CD8-positive, alpha-beta T cell (primary cell): ENCODE measurements at regions of chr17 and their contacts with region 1.

Region 1: DNA sequence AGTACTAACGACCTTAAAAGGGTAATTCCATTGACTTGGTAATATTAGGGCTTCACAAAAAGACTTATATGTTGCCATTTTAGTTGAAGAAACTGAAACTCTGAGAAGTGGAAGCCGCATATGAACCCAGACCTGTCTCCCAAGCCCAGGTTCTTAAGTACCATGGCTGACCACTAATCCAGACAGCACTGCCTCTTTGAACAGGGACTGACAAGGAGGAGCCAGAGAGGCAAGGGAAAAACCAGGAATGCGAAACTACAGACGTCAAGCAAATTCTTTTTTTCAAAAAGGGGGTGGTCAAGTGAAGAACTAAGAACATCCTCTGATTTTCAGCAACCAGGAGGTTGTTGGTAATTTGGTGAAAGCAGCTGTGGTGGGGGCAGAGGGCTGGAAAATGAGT is 15.2 kb downstream of the CYB5D1 start:
- DNase-seq: no peak
- ATAC-seq: no peak
- H3K4me3 ChIP-seq: no peak overlapping the region
- H3K4me3 Mint-ChIP-seq: no peak overlapping the region
- H3K27ac ChIP-seq: no peak overlapping the region
- H3K27ac Mint-ChIP-seq: no peak overlapping the region
- H3K4me1 ChIP-seq: peaks cover 18% of the 10 kb centered on the region
- H3K4me1 Mint-ChIP-seq: peaks cover 32% of the 10 kb centered on the region
- H3K27me3 ChIP-seq: no peaks in the 10 kb centered on the region
- H3K27me3 Mint-ChIP-seq: no peaks in the 10 kb centered on the region
- CTCF ChIP-seq: no peak

Region 2: GRCh38 chr17:7650509-7651096 is 222.4 kb before region 1 on chr17 and contains the start of gene ATP1B2:
- CTCF ChIA-PET with region 1: no interaction called
- POLR2A ChIA-PET with region 1: no interaction called
- intact Hi-C with region 1: no loop called
- DNase-seq: peak; percentile 44 to 88 (median 83)
- ATAC-seq: peak; percentile 94
- H3K4me3 ChIP-seq: peak within 1 kb of the TSS; percentile 47 to 72
- H3K4me3 Mint-ChIP-seq: peak within 1 kb of the TSS; percentile 88
- H3K27ac ChIP-seq: no peak within 1 kb of the TSS
- H3K27ac Mint-ChIP-seq: no peak within 1 kb of the TSS
- H3K4me1 ChIP-seq: peaks cover 17% of the 10 kb centered on the region
- H3K4me1 Mint-ChIP-seq: peaks cover 18% of the 10 kb centered on the region
- H3K27me3 ChIP-seq: peaks cover 8 to 19% of the 10 kb centered on the region in 2 experiments
- H3K27me3 Mint-ChIP-seq: peaks cover 33% of the 10 kb centered on the region
- CTCF ChIP-seq: no peak
- total RNA-seq, gene ATP1B2: 0.22 TPM in 1 of 2 experiments, not detected in the other

Region 3: GRCh38 chr17:7922845-7923628 is 50.0 kb after region 1 on chr17:
- CTCF ChIA-PET with region 1: interaction called, 4 read pairs
- POLR2A ChIA-PET with region 1: interaction called, 10 read pairs
- intact Hi-C with region 1: no loop called
- DNase-seq: peak; percentile 65 to 91 (median 85)
- ATAC-seq: peak; percentile 96
- H3K4me3 ChIP-seq: peak overlapping the region; percentile 64
- H3K4me3 Mint-ChIP-seq: peak overlapping the region; percentile 82
- H3K27ac ChIP-seq: peak overlapping the region; percentile 71 to 84
- H3K27ac Mint-ChIP-seq: peak overlapping the region; percentile 95
- H3K4me1 ChIP-seq: peaks cover 16% of the 10 kb centered on the region
- H3K4me1 Mint-ChIP-seq: peaks cover 18% of the 10 kb centered on the region
- H3K27me3 ChIP-seq: no peaks in the 10 kb centered on the region
- H3K27me3 Mint-ChIP-seq: no peaks in the 10 kb centered on the region
- CTCF ChIP-seq: no peak